ENCODE measurements at regions of chrX and their contacts with region 1.

Region 1: DNA sequence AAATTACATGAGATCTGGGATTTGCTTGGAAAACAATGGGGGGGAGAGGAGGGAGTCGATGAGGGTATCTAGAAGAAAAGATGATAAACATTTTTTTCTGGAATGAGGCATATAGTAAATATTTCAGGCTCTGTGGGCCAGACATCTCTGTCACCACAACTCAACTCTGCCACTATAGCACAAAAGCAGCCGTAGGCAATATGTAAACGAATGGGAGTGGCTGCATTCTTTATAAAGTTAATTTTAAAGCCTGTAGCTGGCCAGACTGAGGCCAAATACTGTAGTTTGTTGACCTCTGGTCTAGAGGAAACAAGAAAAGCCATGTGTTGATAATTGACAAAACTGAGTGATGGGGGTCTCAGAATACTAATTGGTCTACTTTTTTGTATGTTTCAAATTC is 14.1 kb upstream of the TCEANC start:
- DNase-seq: no peak
- ATAC-seq: no peak
- H3K4me3 ChIP-seq: no peak overlapping the region
- H3K27ac ChIP-seq: no peak overlapping the region
- H3K4me1 ChIP-seq: no peaks in the 10 kb centered on the region
- H3K27me3 ChIP-seq: no peaks in the 10 kb centered on the region
- CTCF ChIP-seq: no peak

Region 2: GRCh38 chrX:13013363-13014110 is 625.3 kb before region 1 on chrX:
- intact Hi-C with region 1: no loop called
- DNase-seq: no peak
- ATAC-seq: peak; percentile 68 to 77
- H3K4me3 ChIP-seq: no peak overlapping the region
- H3K27ac ChIP-seq: peak overlapping the region; percentile 62
- H3K4me1 ChIP-seq: peaks cover 9% of the 10 kb centered on the region
- H3K27me3 ChIP-seq: no peaks in the 10 kb centered on the region
- CTCF ChIP-seq: no peak

Region 3: DNA sequence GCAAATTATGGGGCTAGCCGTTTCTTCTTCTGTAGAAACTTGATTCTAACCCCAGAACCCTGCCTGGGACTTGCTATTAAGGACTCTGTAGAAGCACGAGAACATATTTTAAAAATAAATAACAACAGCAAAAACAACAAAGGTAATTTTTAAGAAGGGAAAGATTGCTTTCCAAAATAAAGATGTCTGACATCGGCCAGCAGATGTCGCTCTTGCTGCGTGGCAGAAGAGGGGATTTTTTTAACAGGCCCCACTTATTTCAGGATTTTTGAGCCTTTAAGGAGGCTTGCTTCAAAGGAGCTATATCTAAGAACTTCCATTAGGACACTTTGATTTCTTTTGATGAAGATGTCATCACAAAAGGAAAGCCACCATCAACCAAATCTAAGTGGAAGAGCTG is 132.3 kb before region 1 on chrX:
- intact Hi-C with region 1: loop called (anchors 10 kb)
- DNase-seq: peak; percentile 41
- ATAC-seq: no peak
- H3K4me3 ChIP-seq: no peak overlapping the region
- H3K27ac ChIP-seq: no peak overlapping the region
- H3K4me1 ChIP-seq: no peaks in the 10 kb centered on the region
- H3K27me3 ChIP-seq: no peaks in the 10 kb centered on the region
- CTCF ChIP-seq: peak; percentile 62